ENCODE measurements at regions of chr19 and their contacts with region 1.

Region 1: GRCh38 chr19:48965040-48965805 is at the start of gene FTL:
- DNase-seq: peak; percentile 99
- ATAC-seq: peak; percentile 89
- total RNA-seq, gene FTL: 1,007 TPM

Region 2: GRCh38 chr19:48993175-48994034 is 28.2 kb after region 1 on chr19 and contains the starts of genes GYS1 and RUVBL2:
- intact Hi-C with region 1: loop called (anchors 2 kb)
- DNase-seq: peak; percentile 100
- ATAC-seq: peak; percentile 94
- total RNA-seq, gene GYS1: 99.1 TPM
- total RNA-seq, gene RUVBL2: 46.8 TPM